ENCODE measurements at regions of chrX and their contacts with region 1.

Region 1: DNA sequence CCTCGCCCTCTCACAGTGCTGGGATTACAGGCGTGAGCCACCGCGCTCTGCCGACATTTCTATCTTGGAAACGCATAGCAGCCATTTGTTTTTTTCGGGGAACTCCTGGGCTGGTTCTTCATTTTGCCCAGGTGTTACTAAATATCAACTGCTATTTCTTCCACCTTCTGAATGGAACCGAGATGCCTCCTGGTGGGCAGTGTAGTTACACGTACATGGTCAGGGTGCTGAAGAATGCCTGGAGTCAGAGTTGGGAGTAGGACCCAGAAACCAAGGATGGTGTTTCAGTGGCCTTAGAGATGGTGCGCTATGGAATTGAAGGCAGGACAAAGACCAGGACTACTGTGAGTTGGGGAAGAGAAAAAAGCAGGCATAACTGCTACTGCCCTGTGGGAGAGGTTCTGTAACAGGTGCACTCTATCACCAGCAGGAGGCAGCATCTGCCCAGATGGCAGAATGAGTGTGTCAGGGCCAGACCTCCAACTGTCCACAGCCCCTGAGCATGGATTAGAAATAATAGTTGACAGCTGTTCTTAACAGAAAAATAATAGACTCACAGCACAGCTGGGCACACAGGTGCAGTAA is 81.7 kb downstream of the ZC4H2 start:
- DNase-seq: peak; percentile 5
- ATAC-seq: peak; percentile 56; the same call in 1 of the 2 replicates
- H3K4me3 ChIP-seq: no peak overlapping the region
- H3K27ac ChIP-seq: no peak overlapping the region
- H3K4me1 ChIP-seq: no peaks in the 10 kb centered on the region
- H3K27me3 ChIP-seq: no peaks in the 10 kb centered on the region
- CTCF ChIP-seq: peak; percentile 39
- POLR2A ChIP-seq: no peak
- RAD21 ChIP-seq: peak; percentile 57

Region 2: DNA sequence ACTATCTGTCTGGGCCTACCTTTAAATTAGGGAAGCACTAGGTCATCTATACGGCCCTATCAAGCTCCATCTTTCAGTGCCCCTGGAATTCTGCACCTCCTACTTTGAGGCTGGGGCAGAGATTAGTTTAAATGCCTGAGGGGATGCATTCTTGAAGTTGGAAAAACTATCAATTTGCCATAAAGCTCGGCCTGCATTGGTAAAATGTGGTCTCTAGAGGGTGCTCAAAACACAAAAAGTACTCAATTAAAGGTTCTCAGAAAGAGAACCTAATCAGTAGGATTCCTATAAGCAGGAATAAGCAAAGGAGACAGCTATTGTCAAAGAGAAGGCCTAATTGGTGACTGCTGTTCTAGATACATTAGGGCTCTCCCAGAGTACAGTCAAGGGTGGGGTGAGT is 800.8 kb before region 1 on chrX:
- CTCF ChIA-PET with region 1: no interaction called
- POLR2A ChIA-PET with region 1: no interaction called
- dilution Hi-C with region 1: no loop called
- in situ Hi-C with region 1: no loop called
- intact Hi-C with region 1: loop called (anchors 10 kb)
- DNase-seq: peak; percentile 4
- ATAC-seq: no peak; the same call in 1 of the 2 replicates
- H3K4me3 ChIP-seq: no peak overlapping the region
- H3K27ac ChIP-seq: no peak overlapping the region
- H3K4me1 ChIP-seq: no peaks in the 10 kb centered on the region
- H3K27me3 ChIP-seq: no peaks in the 10 kb centered on the region
- CTCF ChIP-seq: peak; percentile 44
- POLR2A ChIP-seq: no peak
- RAD21 ChIP-seq: peak; percentile 43

Region 3: DNA sequence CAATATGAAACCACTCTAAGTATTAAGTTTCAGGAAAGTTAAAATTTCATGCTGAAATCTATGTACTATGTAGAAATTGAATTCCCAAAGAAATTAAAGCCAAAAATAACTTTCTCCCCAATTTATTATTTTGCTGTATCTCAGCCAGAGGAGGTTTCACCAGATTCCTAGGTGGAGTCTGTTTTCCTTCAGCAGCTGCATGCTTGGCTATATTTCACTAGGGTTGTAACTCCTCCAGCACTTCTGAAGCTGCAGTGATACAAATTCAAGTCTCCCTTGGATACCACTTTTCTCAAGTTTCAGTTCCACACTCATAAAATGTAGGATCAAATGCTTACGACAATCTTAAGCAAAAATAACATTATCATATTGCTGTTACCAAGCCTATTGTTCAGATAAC is 122.9 kb after region 1 on chrX:
- CTCF ChIA-PET with region 1: no interaction called
- POLR2A ChIA-PET with region 1: no interaction called
- dilution Hi-C with region 1: no loop called
- in situ Hi-C with region 1: no loop called
- intact Hi-C with region 1: no loop called
- DNase-seq: no peak
- ATAC-seq: no peak
- H3K4me3 ChIP-seq: no peak overlapping the region
- H3K27ac ChIP-seq: no peak overlapping the region
- H3K4me1 ChIP-seq: no peaks in the 10 kb centered on the region
- H3K27me3 ChIP-seq: no peaks in the 10 kb centered on the region
- CTCF ChIP-seq: no peak
- POLR2A ChIP-seq: no peak
- RAD21 ChIP-seq: no peak

Region 4: GRCh38 chrX:65528705-65529340 is 634.3 kb after region 1 on chrX:
- CTCF ChIA-PET with region 1: no interaction called
- POLR2A ChIA-PET with region 1: no interaction called
- dilution Hi-C with region 1: no loop called
- in situ Hi-C with region 1: no loop called
- intact Hi-C with region 1: loop called (anchors 1 kb)
- DNase-seq: peak; percentile 10
- ATAC-seq: peak; percentile 87
- H3K4me3 ChIP-seq: no peak overlapping the region
- H3K27ac ChIP-seq: no peak overlapping the region
- H3K4me1 ChIP-seq: peaks cover 3% of the 10 kb centered on the region; the same call in 1 of the 2 replicates
- H3K27me3 ChIP-seq: no peaks in the 10 kb centered on the region
- CTCF ChIP-seq: peak; percentile 80
- POLR2A ChIP-seq: no peak
- RAD21 ChIP-seq: peak; percentile 68

Measured in IMR-90 (cell line).